CD4-positive, alpha-beta memory T cell (primary cell): ENCODE measurements at regions of chr6 and their contacts with region 1.

Region 1: DNA sequence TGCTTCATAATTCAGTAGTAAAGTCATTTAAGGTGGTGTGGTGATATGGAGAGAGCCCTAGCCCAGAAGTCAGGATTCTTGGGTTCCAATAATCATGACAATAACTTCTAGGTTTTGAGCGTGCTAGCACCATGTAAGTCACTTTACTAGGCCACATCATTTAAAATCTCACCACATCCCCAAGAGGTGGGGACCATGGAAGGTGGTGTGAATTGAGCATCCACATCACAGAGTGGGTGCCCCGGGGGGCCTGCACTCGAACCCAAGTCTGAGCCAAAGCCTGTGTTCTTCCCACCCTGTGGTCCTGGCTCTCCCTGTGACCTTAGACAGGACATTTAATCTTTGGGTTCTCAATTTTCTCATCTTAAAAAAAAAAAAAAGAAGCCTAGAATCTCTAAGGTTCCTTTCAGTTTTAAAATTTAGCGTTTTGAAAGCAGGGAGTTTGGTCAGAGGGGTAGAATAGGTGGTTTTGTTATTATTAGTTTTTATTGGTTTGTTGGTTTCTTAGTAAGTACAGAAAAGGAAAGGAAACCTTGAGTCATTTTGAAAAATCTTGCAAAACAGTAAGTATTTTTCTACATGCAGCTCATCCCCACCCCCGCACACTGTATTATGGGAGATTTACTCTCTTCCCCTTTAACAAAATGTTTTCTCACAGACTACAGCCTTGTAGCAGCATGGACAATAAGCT is 26.4 kb downstream of the ARMC2 start:
- DNase-seq: peak; percentile 22 to 47 (median 29)
- H3K4me3 ChIP-seq: peak overlapping the region in 1 of 2 donors; percentile 16
- H3K4me3 Mint-ChIP-seq: peak overlapping the region; percentile 70 to 90 (median 77)
- H3K27ac ChIP-seq: peak overlapping the region; percentile 52
- H3K27ac Mint-ChIP-seq: peak overlapping the region; percentile 77 to 96 (median 90)
- H3K4me1 ChIP-seq: peaks cover 46% of the 10 kb centered on the region
- H3K4me1 Mint-ChIP-seq: peaks cover 34 to 54% (median 45%) of the 10 kb centered on the region in 4 donors
- H3K27me3 ChIP-seq: no peaks in the 10 kb centered on the region
- H3K27me3 Mint-ChIP-seq: no peaks in the 10 kb centered on the region

Region 2: GRCh38 chr6:108805611-108806167 is 68.9 kb before region 1 on chr6:
- CTCF ChIA-PET with region 1: no interaction called
- POLR2A ChIA-PET with region 1: no interaction called
- intact Hi-C with region 1: no loop called
- DNase-seq: no peak
- H3K4me3 ChIP-seq: no peak overlapping the region
- H3K4me3 Mint-ChIP-seq: no peak overlapping the region
- H3K27ac ChIP-seq: no peak overlapping the region
- H3K27ac Mint-ChIP-seq: peak overlapping the region in 2 of 7 donors; percentile 25 to 51
- H3K4me1 ChIP-seq: no peaks in the 10 kb centered on the region
- H3K4me1 Mint-ChIP-seq: peaks cover 1 to 5% (median 3%) of the 10 kb centered on the region in 4 donors
- H3K27me3 ChIP-seq: no peaks in the 10 kb centered on the region
- H3K27me3 Mint-ChIP-seq: no peaks in the 10 kb centered on the region

Region 3: GRCh38 chr6:108848116-108848868 is 26.3 kb before region 1 on chr6 and contains the start of gene ARMC2:
- CTCF ChIA-PET with region 1: interaction called, 6 read pairs
- POLR2A ChIA-PET with region 1: interaction called, 10 read pairs
- intact Hi-C with region 1: no loop called
- DNase-seq: peak; percentile 85 to 88 (median 86)
- H3K4me3 ChIP-seq: peak within 1 kb of the TSS; percentile 46 to 78
- H3K4me3 Mint-ChIP-seq: peak within 1 kb of the TSS; percentile 84 to 91 (median 86)
- H3K27ac ChIP-seq: peak within 1 kb of the TSS; percentile 58
- H3K27ac Mint-ChIP-seq: peak within 1 kb of the TSS; percentile 81 to 93 (median 91)
- H3K4me1 ChIP-seq: peaks cover 15% of the 10 kb centered on the region
- H3K4me1 Mint-ChIP-seq: peaks cover 17 to 33% (median 23%) of the 10 kb centered on the region in 4 donors
- H3K27me3 ChIP-seq: no peaks in the 10 kb centered on the region
- H3K27me3 Mint-ChIP-seq: no peaks in the 10 kb centered on the region
- total RNA-seq, gene ARMC2: 10.7 to 11.2 TPM